Esophagus muscularis mucosa (tissue), 4 donors: ENCODE measurements at regions of chr5 and their contacts with region 1.

Region 1: GRCh38 chr5:140107312-140108083 is 6.4 kb upstream of the PURA start:
- DNase-seq: peak; percentile 96
- H3K4me3 ChIP-seq: peak overlapping the region; percentile 73 to 82 (median 74)
- H3K27ac ChIP-seq: peak overlapping the region; percentile 97 to 99 (median 97)
- H3K4me1 ChIP-seq: peaks cover 23 to 59% (median 49%) of the 10 kb centered on the region in 4 donors
- H3K27me3 ChIP-seq: no peaks in the 10 kb centered on the region
- CTCF ChIP-seq: peak in 2 of 3 experiments; percentile 22 to 34
- EP300 ChIP-seq: no peak
- POLR2A ChIP-seq: peak; percentile 72

Region 2: DNA sequence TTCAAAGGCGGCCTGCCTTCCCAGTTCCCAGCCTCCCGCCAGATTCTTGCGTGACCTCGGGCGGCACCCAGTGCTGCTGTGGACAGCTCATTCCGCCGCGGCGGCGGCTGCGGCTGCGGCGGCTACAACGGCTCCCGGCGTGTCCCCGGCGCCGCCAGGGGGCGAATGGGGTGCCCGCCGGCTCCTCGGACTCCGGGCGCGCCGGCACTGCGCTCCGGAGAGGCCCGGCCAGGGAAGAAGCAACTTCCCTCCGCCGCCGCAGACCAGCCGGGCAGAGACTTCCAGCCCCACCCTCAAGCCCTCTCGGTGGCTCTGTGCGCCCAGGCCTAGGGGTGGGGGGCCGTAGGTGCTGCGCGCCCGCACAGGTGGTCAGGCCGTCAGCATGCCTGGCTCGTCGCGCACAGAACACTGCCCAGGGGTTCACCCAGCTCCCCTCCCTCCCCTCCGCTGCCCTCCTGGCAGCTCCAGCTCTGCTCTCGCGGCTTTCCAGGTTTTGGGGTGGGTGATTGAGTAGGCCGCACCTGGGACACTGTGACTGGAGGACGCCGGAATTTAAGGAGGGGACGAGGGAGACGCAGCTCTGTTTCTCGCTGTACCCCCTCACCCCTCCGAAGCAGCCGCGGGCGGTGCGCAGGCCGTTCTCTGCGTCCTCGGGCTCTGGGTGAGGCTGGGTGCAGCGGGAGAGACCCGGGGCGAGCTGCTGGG is 38.5 kb after region 1 on chr5:
- intact Hi-C with region 1: loop called (anchors 5 kb)
- DNase-seq: no peak
- H3K4me3 ChIP-seq: peak overlapping the region; percentile 48 to 58 (median 56)
- H3K27ac ChIP-seq: peak overlapping the region; percentile 13 to 53 (median 28)
- H3K4me1 ChIP-seq: peaks cover 16 to 53% (median 27%) of the 10 kb centered on the region in 4 donors
- H3K27me3 ChIP-seq: no peaks in the 10 kb centered on the region
- CTCF ChIP-seq: peak; percentile 75 to 93 (median 78)
- EP300 ChIP-seq: no peak
- POLR2A ChIP-seq: no peak